ENCODE measurements at regions of chr19 and their contacts with region 1.

Region 1: GRCh38 chr19:41298348-41298964 is 11.5 kb upstream of the CCDC97 start:
- DNase-seq: no peak
- H3K4me3 Mint-ChIP-seq: no peak overlapping the region
- H3K27ac Mint-ChIP-seq: peak overlapping the region; percentile 76
- H3K4me1 Mint-ChIP-seq: peaks cover 89% of the 10 kb centered on the region
- H3K27me3 Mint-ChIP-seq: no peaks in the 10 kb centered on the region

Region 2: GRCh38 chr19:41308392-41309179 is 10.1 kb after region 1 on chr19:
- CTCF ChIA-PET with region 1: interaction called, 14 read pairs
- POLR2A ChIA-PET with region 1: interaction called, 3 read pairs
- DNase-seq: peak; percentile 93
- H3K4me3 Mint-ChIP-seq: peak overlapping the region; percentile 94
- H3K27ac Mint-ChIP-seq: peak overlapping the region; percentile 99
- H3K4me1 Mint-ChIP-seq: peaks cover 87% of the 10 kb centered on the region
- H3K27me3 Mint-ChIP-seq: no peaks in the 10 kb centered on the region